ENCODE measurements at regions of chr17 and their contacts with region 1.

Region 1: GRCh38 chr17:32936894-32937500 is 9.0 kb downstream of the TMEM98 start:
- DNase-seq: peak; percentile 82
- CTCF ChIP-seq: peak; percentile 88

Region 2: GRCh38 chr17:32659419-32659842 is 277.6 kb before region 1 on chr17:
- CTCF ChIA-PET with region 1: interaction called, 13 read pairs
- POLR2A ChIA-PET with region 1: no interaction called
- DNase-seq: peak; percentile 79
- CTCF ChIP-seq: peak; percentile 75

Region 3: GRCh38 chr17:32915245-32915644 is 21.8 kb before region 1 on chr17:
- CTCF ChIA-PET with region 1: interaction called, 10 read pairs
- POLR2A ChIA-PET with region 1: no interaction called
- DNase-seq: no peak
- CTCF ChIP-seq: no peak

Region 4: DNA sequence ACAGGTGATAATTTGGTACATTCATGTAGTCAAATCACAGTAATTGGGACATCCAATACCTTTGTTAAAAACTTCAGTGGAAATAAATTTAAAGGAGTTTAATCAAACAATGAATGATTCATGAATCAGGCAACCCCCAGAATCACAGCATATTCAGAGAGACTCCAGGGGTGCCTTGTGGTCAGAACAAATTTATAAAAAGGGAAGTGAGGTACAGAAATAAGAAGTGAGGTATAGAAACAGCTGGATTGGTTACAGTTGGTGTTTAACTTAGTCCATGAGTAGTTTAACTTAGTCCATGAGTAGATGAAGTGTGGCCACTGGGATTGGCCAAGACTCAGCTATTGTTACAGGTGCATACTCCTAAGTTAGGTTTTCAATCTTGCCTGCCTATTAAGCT is 16.0 kb after region 1 on chr17:
- CTCF ChIA-PET with region 1: interaction called, 24 read pairs
- POLR2A ChIA-PET with region 1: no interaction called
- DNase-seq: no peak
- CTCF ChIP-seq: no peak

Region 5: GRCh38 chr17:32960506-32961214 is 23.7 kb after region 1 on chr17:
- CTCF ChIA-PET with region 1: interaction called, 11 read pairs
- POLR2A ChIA-PET with region 1: no interaction called
- DNase-seq: no peak
- CTCF ChIP-seq: no peak

Region 6: GRCh38 chr17:32997753-32998632 is 61.0 kb after region 1 on chr17:
- CTCF ChIA-PET with region 1: interaction called, 18 read pairs
- POLR2A ChIA-PET with region 1: no interaction called
- DNase-seq: peak; percentile 82
- CTCF ChIP-seq: peak; percentile 91

Region 7: GRCh38 chr17:33154869-33155455 is 218.0 kb after region 1 on chr17:
- CTCF ChIA-PET with region 1: no interaction called
- POLR2A ChIA-PET with region 1: no interaction called
- DNase-seq: no peak
- CTCF ChIP-seq: no peak

Measured in GM10248 (cell line).